ENCODE measurements at regions of chr17 and their contacts with region 1.

Region 1: DNA sequence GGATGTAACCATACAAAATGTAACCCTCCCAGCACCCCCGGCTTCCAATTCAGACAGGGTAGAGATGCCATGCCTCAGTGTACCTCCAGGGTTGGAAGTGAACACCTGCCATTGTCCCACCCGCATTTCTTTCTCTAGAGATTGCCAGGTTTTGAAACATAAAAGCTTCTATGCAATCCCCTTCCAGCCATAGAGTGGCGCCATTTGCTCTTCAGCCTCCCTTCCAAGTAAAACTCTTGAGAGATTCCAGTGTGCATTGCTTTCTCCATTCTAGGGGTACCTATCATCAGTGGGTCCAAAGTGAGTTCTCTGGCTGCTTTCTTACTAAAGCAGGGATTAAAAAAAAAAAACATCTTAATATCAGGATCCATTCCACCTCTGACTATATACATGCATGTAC is 133.1 kb upstream of the RPL38 start:
- DNase-seq: no peak
- H3K4me3 ChIP-seq: no peak overlapping the region
- CTCF ChIP-seq: no peak

Region 2: GRCh38 chr17:73722165-73722564 is 348.2 kb before region 1 on chr17:
- in situ Hi-C with region 1: no loop called
- DNase-seq: no peak
- H3K4me3 ChIP-seq: no peak overlapping the region
- CTCF ChIP-seq: no peak

Region 3: DNA sequence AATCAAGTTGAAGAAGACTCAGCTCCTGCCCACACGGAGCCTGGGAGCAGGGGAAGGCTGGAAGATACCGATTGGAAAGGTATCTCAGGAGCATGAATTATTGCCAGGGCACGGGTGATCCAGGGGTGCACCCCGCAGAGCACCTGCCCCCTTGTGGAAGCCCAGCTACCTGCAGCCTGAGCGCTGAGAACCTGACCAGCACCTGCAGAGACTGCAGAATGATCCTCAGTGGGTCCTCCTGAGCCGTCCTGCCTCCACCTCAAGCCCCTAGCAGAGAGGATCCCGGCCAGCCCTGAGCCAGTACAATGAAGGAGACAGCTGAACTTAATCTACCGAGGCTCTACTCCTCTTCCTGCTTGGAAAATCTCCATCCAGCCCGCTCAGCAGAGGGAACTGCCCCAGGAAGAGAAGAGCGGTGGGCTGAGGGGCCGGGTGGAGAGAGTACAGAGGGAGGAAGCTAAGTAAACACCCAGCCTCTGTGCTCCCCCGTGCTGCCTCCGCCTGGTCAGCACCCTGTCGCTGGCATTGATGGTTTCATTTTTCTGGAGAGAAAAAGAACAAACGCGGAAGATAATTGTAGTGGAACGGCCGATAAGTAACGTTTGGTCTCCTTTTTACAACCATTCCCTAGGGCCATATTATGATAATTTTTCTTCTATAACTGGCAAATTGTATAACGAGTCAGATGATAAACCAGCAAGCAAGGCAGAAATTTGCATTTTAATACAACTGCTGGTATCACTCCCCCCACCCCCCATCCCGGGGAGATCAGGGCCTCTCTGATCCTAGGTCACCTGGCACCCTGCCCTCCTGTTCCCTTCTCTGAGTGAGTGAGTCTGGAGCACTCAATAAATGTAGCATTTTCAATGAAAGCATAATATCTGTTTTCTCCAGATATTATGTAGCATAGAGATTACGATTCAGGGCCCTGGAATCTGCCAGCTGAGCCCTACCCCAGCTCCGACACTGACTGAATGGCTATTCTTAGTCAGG is 71.4 kb before region 1 on chr17:
- in situ Hi-C with region 1: loop called (anchors 5 kb)
- DNase-seq: no peak
- H3K4me3 ChIP-seq: no peak overlapping the region
- CTCF ChIP-seq: peak; percentile 59

Measured in astrocyte of the cerebellum (primary cell).